B cell (primary cell): ENCODE measurements at regions of chr14 and their contacts with region 1.

Region 1: GRCh38 chr14:56491299-56492285 is 88.0 kb upstream of the TMEM260 start:
- DNase-seq: peak; percentile 63
- ATAC-seq: peak; percentile 51
- H3K4me3 ChIP-seq: no peak overlapping the region
- H3K4me3 Mint-ChIP-seq: no peak overlapping the region
- H3K27ac ChIP-seq: no peak overlapping the region
- H3K27ac Mint-ChIP-seq: no peak overlapping the region
- H3K4me1 ChIP-seq: peaks cover 4 to 6% of the 10 kb centered on the region in 2 donors
- H3K4me1 Mint-ChIP-seq: peaks cover 4% of the 10 kb centered on the region
- H3K27me3 ChIP-seq: no peaks in the 10 kb centered on the region
- H3K27me3 Mint-ChIP-seq: peaks cover 6% of the 10 kb centered on the region
- CTCF ChIP-seq: peak; percentile 54

Region 2: DNA sequence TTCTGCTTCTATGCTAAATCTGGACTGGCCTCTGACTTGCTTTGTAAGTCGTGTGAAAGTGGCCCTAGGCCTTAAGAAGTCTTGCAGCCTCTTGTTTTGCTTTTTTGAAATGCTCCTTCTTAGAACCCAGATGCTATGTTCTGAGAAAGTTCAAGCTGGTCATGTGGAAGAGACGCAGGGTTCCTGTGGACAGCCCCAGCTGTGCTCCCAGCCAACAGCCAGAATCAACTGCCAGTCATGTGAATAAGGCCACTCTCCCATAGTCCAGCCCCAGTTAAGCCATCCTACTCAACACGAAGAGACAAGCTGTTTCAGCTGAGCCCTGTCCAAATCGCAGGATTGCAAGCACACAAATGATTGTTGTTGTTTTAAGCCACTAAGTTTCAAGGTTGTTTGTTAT is 1013.9 kb before region 1 on chr14:
- CTCF ChIA-PET with region 1: no interaction called
- POLR2A ChIA-PET with region 1: no interaction called
- intact Hi-C with region 1: no loop called
- DNase-seq: no peak
- ATAC-seq: no peak
- H3K4me3 ChIP-seq: no peak overlapping the region
- H3K4me3 Mint-ChIP-seq: no peak overlapping the region
- H3K27ac ChIP-seq: no peak overlapping the region
- H3K27ac Mint-ChIP-seq: no peak overlapping the region
- H3K4me1 ChIP-seq: no peaks in the 10 kb centered on the region
- H3K4me1 Mint-ChIP-seq: no peaks in the 10 kb centered on the region
- H3K27me3 ChIP-seq: no peaks in the 10 kb centered on the region
- H3K27me3 Mint-ChIP-seq: no peaks in the 10 kb centered on the region
- CTCF ChIP-seq: no peak

Region 3: DNA sequence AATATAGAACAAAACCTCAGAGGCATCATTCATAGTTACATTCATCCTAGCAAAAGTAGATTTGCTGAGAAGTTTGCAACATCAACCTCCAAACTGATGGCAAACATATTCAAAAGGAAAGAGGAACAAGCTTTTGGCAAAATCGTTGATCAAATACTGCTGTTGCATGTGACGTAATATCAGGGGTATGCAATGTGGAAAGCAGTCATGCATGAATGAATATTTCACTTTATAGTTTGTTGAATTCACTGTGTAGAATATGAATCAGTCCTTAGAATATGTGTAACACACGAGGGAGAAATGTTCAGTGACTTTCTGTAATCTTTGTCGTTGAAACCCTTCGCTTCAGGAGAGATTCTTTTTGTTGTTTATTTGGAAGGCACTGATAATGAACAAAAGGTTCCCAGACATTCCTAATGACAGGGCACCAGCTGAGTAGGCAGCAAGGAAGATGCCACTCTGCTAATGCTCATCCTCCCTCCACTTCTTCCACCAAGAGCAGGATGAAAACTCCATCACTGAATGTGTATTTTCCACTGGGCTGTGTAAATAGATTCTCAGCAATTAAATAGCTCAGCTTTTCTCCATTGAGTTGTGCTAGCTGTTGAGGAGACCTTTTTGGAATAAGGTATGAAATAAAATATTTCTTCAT is 247.3 kb before region 1 on chr14:
- CTCF ChIA-PET with region 1: no interaction called
- POLR2A ChIA-PET with region 1: no interaction called
- intact Hi-C with region 1: no loop called
- DNase-seq: no peak
- ATAC-seq: no peak
- H3K4me3 ChIP-seq: no peak overlapping the region
- H3K4me3 Mint-ChIP-seq: no peak overlapping the region
- H3K27ac ChIP-seq: no peak overlapping the region
- H3K27ac Mint-ChIP-seq: no peak overlapping the region
- H3K4me1 ChIP-seq: no peaks in the 10 kb centered on the region
- H3K4me1 Mint-ChIP-seq: peaks cover 16% of the 10 kb centered on the region
- H3K27me3 ChIP-seq: no peaks in the 10 kb centered on the region
- H3K27me3 Mint-ChIP-seq: no peaks in the 10 kb centered on the region
- CTCF ChIP-seq: no peak

Region 4: DNA sequence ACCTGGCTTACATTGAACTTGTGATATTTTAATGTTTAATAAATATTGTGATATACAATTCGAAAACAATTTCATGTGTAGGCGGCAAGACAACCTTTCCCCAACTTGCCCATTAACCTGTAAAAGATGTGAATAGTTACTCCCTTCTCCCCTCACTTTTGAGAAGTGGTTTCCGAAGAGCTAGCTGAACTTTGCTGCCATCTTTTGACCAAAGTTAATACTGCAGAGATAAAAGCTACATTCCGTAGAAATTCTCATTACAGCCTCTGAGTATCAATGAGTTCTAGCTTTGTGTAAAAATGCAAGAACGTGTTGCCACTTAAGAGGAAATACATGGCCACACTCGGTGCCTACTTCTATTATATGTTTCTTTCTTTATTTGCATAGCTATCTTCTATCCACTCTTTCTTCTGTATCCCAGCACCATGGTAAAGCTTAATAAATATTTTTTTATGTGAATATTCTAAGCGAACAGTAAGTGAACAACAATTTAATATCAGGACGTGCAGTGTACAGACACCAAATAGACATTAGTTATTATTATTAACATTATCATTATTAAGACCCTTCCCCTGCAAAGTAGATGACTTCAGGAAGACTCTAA is 17.1 kb before region 1 on chr14:
- CTCF ChIA-PET with region 1: interaction called, 26 read pairs
- POLR2A ChIA-PET with region 1: no interaction called
- intact Hi-C with region 1: no loop called
- DNase-seq: peak; percentile 58
- ATAC-seq: peak; percentile 24
- H3K4me3 ChIP-seq: no peak overlapping the region
- H3K4me3 Mint-ChIP-seq: no peak overlapping the region
- H3K27ac ChIP-seq: no peak overlapping the region
- H3K27ac Mint-ChIP-seq: no peak overlapping the region
- H3K4me1 ChIP-seq: no peaks in the 10 kb centered on the region
- H3K4me1 Mint-ChIP-seq: no peaks in the 10 kb centered on the region
- H3K27me3 ChIP-seq: no peaks in the 10 kb centered on the region
- H3K27me3 Mint-ChIP-seq: peaks cover 4% of the 10 kb centered on the region
- CTCF ChIP-seq: peak; percentile 90

Region 5: DNA sequence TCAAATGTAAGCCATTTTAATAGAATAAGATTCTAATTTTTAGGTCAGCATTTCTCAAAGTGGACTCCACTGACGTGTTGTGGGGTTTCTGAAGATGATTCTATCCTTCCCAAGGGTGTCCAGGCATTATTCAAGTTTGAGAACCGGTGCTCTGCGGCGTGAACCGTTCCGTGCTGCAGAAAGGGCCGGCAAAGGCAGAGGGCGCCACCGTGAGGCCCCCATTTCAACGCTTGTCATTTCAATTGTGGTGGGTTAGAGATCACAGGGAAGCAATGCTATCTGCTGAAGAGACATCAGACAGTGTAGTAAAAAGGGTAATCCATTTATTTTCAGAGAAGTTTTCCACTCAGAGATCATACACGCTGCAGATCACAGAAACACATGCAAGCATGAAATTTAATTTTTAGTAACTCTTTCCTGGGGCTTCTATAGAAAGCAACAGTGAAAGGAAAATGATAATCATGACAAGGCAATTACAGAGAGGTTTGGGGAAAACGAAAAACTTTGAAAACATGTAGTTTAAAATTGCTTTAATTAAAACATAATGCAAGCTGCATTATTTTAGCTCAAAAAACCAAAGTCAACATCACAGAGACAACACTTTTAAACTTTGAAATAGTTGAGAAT is 575.4 kb after region 1 on chr14:
- CTCF ChIA-PET with region 1: interaction called, 3 read pairs
- POLR2A ChIA-PET with region 1: no interaction called
- intact Hi-C with region 1: loop called (anchors 2 kb)
- DNase-seq: peak; percentile 38
- ATAC-seq: no peak
- H3K4me3 ChIP-seq: no peak overlapping the region
- H3K4me3 Mint-ChIP-seq: no peak overlapping the region
- H3K27ac ChIP-seq: no peak overlapping the region
- H3K27ac Mint-ChIP-seq: no peak overlapping the region
- H3K4me1 ChIP-seq: no peaks in the 10 kb centered on the region
- H3K4me1 Mint-ChIP-seq: peaks cover 3% of the 10 kb centered on the region
- H3K27me3 ChIP-seq: peaks cover 0 to 9% (median 1%) of the 10 kb centered on the region in 4 experiments
- H3K27me3 Mint-ChIP-seq: peaks cover 33% of the 10 kb centered on the region
- CTCF ChIP-seq: peak; percentile 71

Region 6: GRCh38 chr14:57205938-57206337 is 714.3 kb after region 1 on chr14:
- CTCF ChIA-PET with region 1: interaction called, 7 read pairs
- POLR2A ChIA-PET with region 1: no interaction called
- intact Hi-C with region 1: loop called (anchors 2 kb)
- DNase-seq: no peak
- ATAC-seq: no peak
- H3K4me3 ChIP-seq: no peak overlapping the region
- H3K4me3 Mint-ChIP-seq: no peak overlapping the region
- H3K27ac ChIP-seq: no peak overlapping the region
- H3K27ac Mint-ChIP-seq: no peak overlapping the region
- H3K4me1 ChIP-seq: no peaks in the 10 kb centered on the region
- H3K4me1 Mint-ChIP-seq: no peaks in the 10 kb centered on the region
- H3K27me3 ChIP-seq: no peaks in the 10 kb centered on the region
- H3K27me3 Mint-ChIP-seq: no peaks in the 10 kb centered on the region
- CTCF ChIP-seq: no peak

Region 7: GRCh38 chr14:57293866-57294837 is 802.6 kb after region 1 on chr14:
- CTCF ChIA-PET with region 1: interaction called, 18 read pairs
- POLR2A ChIA-PET with region 1: no interaction called
- intact Hi-C with region 1: no loop called
- DNase-seq: no peak
- ATAC-seq: no peak
- H3K4me3 ChIP-seq: no peak overlapping the region
- H3K4me3 Mint-ChIP-seq: no peak overlapping the region
- H3K27ac ChIP-seq: no peak overlapping the region
- H3K27ac Mint-ChIP-seq: no peak overlapping the region
- H3K4me1 ChIP-seq: no peaks in the 10 kb centered on the region
- H3K4me1 Mint-ChIP-seq: no peaks in the 10 kb centered on the region
- H3K27me3 ChIP-seq: no peaks in the 10 kb centered on the region
- H3K27me3 Mint-ChIP-seq: no peaks in the 10 kb centered on the region
- CTCF ChIP-seq: peak; percentile 65

Region 8: GRCh38 chr14:57317316-57317715 is 825.7 kb after region 1 on chr14:
- CTCF ChIA-PET with region 1: interaction called, 91 read pairs
- POLR2A ChIA-PET with region 1: no interaction called
- intact Hi-C with region 1: no loop called
- DNase-seq: peak; percentile 78
- ATAC-seq: peak; percentile 36
- H3K4me3 ChIP-seq: no peak overlapping the region
- H3K4me3 Mint-ChIP-seq: no peak overlapping the region
- H3K27ac ChIP-seq: no peak overlapping the region
- H3K27ac Mint-ChIP-seq: no peak overlapping the region
- H3K4me1 ChIP-seq: no peaks in the 10 kb centered on the region
- H3K4me1 Mint-ChIP-seq: peaks cover 3% of the 10 kb centered on the region
- H3K27me3 ChIP-seq: peaks cover 0 to 12% (median 2%) of the 10 kb centered on the region in 4 experiments
- H3K27me3 Mint-ChIP-seq: peaks cover 13% of the 10 kb centered on the region
- CTCF ChIP-seq: peak; percentile 96

Region 9: DNA sequence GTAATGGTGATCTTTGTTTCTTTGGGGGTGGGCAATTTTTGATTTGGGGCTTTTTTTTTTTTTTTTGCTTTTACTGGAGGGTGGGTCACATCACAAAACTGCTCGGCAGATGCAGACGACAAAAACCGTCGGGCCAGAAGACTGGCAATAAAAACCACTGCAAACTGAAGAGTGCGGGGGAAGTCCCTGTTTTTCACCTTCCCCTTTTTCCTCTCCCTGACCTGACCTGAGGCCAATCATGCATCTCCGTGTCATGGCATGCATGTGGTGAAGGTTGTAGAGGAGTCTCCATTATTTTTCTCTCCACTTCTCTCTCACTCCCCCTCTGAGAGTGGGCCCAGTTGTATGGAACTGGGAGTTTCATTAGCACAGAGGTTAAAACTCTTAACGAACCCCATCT is 834.7 kb after region 1 on chr14:
- CTCF ChIA-PET with region 1: interaction called, 15 read pairs
- POLR2A ChIA-PET with region 1: no interaction called
- intact Hi-C with region 1: no loop called
- DNase-seq: peak; percentile 54
- ATAC-seq: peak; percentile 90
- H3K4me3 ChIP-seq: no peak overlapping the region
- H3K4me3 Mint-ChIP-seq: no peak overlapping the region
- H3K27ac ChIP-seq: no peak overlapping the region
- H3K27ac Mint-ChIP-seq: peak overlapping the region; percentile 46
- H3K4me1 ChIP-seq: peaks cover 5 to 7% of the 10 kb centered on the region in 2 donors
- H3K4me1 Mint-ChIP-seq: peaks cover 10% of the 10 kb centered on the region
- H3K27me3 ChIP-seq: peaks cover 0 to under 1% (median 0%) of the 10 kb centered on the region in 4 experiments
- H3K27me3 Mint-ChIP-seq: peaks cover 13% of the 10 kb centered on the region
- CTCF ChIP-seq: no peak